Transverse colon (tissue), 4 donors: ENCODE measurements at regions of chr16 and their contacts with region 1.

Region 1: DNA sequence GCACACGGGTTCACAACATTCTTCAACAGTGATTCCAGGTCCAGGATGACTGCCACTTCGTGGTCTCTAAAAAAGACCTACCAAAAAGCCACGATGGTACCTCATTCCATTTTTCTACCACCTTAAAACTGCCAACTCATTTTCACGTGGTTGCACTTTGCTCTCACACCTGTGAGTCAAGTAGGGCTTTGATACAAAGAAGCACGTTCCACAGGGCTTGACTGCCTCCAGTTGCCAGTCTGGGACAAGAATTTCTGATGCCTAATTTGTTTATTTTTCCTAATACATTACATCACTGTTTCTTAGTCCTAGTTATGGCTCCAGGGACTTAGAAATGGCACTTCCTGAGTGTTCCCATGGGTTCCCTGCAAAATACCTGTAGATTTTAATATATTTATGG is 911.6 kb upstream of the EEF2KMT start:
- DNase-seq: peak; percentile 26
- H3K4me3 ChIP-seq: no peak overlapping the region
- H3K27ac ChIP-seq: no peak overlapping the region
- H3K4me1 ChIP-seq: no peaks in the 10 kb centered on the region
- H3K27me3 ChIP-seq: no peaks in the 10 kb centered on the region
- CTCF ChIP-seq: no peak
- EP300 ChIP-seq: no peak
- POLR2A ChIP-seq: no peak

Region 2: DNA sequence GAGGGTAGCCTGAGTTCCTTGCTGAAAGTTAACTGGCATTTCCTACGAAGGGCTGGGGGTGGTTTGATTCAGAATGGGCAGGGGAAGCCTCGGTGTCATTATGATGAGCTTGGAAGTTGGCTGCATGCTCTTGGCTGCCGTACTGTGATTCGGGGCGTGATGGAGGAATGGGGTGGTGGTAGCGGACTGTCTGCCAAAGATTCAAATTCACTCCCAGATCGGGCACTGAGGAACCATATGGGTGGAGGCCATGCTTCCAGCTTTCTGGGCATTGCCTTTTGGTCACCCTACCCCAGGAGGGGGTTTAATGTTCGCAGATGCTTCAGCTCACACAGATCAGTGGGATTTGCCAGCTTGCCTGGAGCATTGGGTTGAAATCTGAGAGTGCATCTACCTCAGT is 418.7 kb before region 1 on chr16:
- in situ Hi-C with region 1: no loop called
- intact Hi-C with region 1: no loop called
- DNase-seq: no peak
- H3K4me3 ChIP-seq: no peak overlapping the region
- H3K27ac ChIP-seq: no peak overlapping the region
- H3K4me1 ChIP-seq: no peaks in the 10 kb centered on the region
- H3K27me3 ChIP-seq: no peaks in the 10 kb centered on the region
- CTCF ChIP-seq: no peak
- EP300 ChIP-seq: no peak
- POLR2A ChIP-seq: no peak

Region 3: DNA sequence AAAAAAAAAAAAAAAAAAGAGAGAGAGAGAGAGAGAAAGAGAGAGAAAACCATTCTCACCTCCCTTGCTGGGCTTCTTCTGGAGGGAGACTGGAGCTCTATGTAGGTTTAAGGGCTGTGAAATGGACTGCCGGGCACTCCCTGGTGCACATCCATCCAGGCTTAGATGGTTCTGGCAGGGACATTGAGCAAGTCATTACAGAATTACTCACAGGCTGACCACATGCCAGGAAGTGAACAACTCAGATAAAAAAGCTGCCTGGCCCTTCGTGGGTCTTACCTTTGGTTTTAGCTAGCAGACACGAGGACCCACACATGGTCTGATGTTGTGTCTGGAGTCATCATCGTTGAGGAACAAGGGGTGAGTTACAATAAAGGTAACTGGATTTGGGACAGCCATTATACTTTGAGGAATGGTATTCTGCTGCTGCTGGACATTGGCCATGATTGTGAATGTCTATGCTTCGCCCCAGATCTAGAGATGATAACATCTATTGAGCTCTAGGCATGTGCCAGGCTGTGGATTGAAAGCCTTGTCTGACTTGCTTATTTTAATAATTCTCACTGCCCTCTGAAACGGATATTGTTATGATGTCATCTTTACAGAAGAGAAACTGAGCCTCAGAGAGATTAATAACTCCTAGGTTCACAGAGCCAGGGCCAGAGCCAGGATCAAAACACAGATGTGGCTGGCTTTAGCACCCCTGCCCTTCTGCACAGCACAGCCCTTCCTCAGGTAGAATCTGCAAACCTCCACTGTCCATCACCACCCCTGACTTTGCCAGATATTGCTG is 64.0 kb before region 1 on chr16:
- in situ Hi-C with region 1: loop called in 1 of 4 experiments (anchors 10 kb)
- intact Hi-C with region 1: no loop called
- DNase-seq: no peak
- H3K4me3 ChIP-seq: no peak overlapping the region
- H3K27ac ChIP-seq: no peak overlapping the region
- H3K4me1 ChIP-seq: no peaks in the 10 kb centered on the region
- H3K27me3 ChIP-seq: no peaks in the 10 kb centered on the region
- CTCF ChIP-seq: no peak
- EP300 ChIP-seq: no peak
- POLR2A ChIP-seq: no peak

Region 4: DNA sequence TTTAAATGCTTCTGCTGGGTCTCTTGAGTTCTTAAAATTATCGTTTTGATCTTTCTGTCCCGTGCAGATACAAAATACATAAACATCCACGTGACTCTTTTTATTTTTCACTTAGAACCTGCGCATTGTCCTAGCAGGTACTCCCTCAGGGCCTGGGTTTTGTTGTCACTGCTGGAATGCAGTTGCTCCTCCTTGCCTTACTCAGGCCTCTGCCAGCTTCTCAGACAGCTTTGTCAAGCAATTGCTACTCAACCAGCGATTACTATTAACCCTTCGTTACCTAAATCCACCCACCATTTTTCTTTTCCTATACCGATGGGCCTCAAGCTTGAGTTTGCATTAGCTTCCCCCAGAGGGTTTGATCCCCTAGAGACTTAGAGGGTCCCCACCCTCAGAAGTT is 917.6 kb after region 1 on chr16:
- in situ Hi-C with region 1: no loop called
- intact Hi-C with region 1: no loop called
- DNase-seq: no peak
- H3K4me3 ChIP-seq: no peak overlapping the region
- H3K27ac ChIP-seq: no peak overlapping the region
- H3K4me1 ChIP-seq: no peaks in the 10 kb centered on the region
- H3K27me3 ChIP-seq: no peaks in the 10 kb centered on the region
- CTCF ChIP-seq: no peak
- EP300 ChIP-seq: no peak
- POLR2A ChIP-seq: no peak